Heart left ventricle (tissue), 16 donors: ENCODE measurements at regions of chr21 and their contacts with region 1.

Region 1: GRCh38 chr21:46110499-46111192 is 12.7 kb downstream of the COL6A2 start:
- DNase-seq: peak; percentile 62 to 87 (median 76)
- ATAC-seq: peak; percentile 91 to 96 (median 95)
- H3K4me3 ChIP-seq: peak overlapping the region in 6 of 12 donors; percentile 0 to 19 (median 6)
- H3K27ac ChIP-seq: peak overlapping the region; percentile 29 to 91 (median 80)
- H3K4me1 ChIP-seq: peaks cover 0 to 27% (median 18%) of the 10 kb centered on the region in 12 donors
- H3K27me3 ChIP-seq: no peaks in the 10 kb centered on the region
- CTCF ChIP-seq: peak in 3 of 12 donors; percentile 7 to 36 (median 30)
- POLR2A ChIP-seq: no peak

Region 2: GRCh38 chr21:45655124-45655523 is 455.5 kb before region 1 on chr21:
- intact Hi-C with region 1: no loop called
- DNase-seq: no peak
- ATAC-seq: no peak
- H3K4me3 ChIP-seq: no peak overlapping the region
- H3K27ac ChIP-seq: no peak overlapping the region
- H3K4me1 ChIP-seq: peaks cover 0 to 6% (median 0%) of the 10 kb centered on the region in 12 donors
- H3K27me3 ChIP-seq: peaks cover 0 to 3% (median 0%) of the 10 kb centered on the region in 9 donors
- CTCF ChIP-seq: no peak
- POLR2A ChIP-seq: no peak

Region 3: GRCh38 chr21:45995686-45996179 is 114.9 kb before region 1 on chr21:
- intact Hi-C with region 1: loop called in 1 of 10 experiments (anchors 10 kb)
- DNase-seq: peak in 4 of 5 donors; percentile 16 to 40 (median 27)
- ATAC-seq: no peak
- H3K4me3 ChIP-seq: no peak overlapping the region
- H3K27ac ChIP-seq: peak overlapping the region in 5 of 12 donors; percentile 5 to 80 (median 17)
- H3K4me1 ChIP-seq: peaks cover 0 to 27% (median 0%) of the 10 kb centered on the region in 12 donors
- H3K27me3 ChIP-seq: no peaks in the 10 kb centered on the region
- CTCF ChIP-seq: no peak
- POLR2A ChIP-seq: no peak

Region 4: DNA sequence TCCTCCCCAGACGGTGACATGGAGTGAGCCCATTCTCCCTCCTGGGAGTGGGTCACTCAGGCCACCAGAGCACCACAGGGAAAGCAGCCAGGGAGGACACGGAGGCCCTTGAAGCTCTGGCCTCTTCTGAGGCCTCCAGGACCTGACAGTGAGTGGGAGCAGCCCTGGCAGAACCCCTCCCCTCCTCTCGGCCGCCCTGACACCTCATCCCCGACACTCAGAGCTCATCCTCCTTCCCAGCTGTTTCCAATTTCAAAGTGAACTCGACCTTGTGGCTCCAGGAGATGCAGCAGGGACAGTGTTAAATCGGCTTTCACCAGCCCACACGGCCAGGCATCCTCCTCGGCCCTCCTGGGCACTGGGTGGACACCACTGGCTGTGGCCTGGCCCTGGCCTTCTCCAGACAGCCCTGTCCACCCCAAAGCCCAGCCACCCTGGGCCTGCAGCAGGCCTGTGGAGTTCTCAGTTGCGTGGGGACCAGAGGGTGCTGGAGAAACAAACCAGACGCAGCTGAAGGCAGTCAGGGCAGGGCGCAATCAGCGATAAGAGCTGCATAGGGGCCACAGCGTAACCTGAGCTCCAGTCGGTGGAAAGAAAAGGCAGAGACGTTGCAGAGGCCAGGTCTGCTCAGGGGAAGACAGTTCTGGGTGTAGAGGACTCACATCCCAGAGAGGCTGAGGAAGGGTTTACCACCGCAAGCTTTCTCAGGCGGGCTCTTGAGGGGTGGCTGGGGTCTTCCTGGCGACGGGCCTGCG is 17.6 kb after region 1 on chr21:
- intact Hi-C with region 1: loop called in 1 of 10 experiments (anchors 2 kb)
- DNase-seq: peak; percentile 76 to 86 (median 77)
- ATAC-seq: peak; percentile 72 to 89 (median 83)
- H3K4me3 ChIP-seq: no peak overlapping the region
- H3K27ac ChIP-seq: peak overlapping the region; percentile 20 to 87 (median 75)
- H3K4me1 ChIP-seq: peaks cover 0 to 18% (median 5%) of the 10 kb centered on the region in 12 donors
- H3K27me3 ChIP-seq: no peaks in the 10 kb centered on the region
- CTCF ChIP-seq: no peak
- POLR2A ChIP-seq: no peak

Region 5: DNA sequence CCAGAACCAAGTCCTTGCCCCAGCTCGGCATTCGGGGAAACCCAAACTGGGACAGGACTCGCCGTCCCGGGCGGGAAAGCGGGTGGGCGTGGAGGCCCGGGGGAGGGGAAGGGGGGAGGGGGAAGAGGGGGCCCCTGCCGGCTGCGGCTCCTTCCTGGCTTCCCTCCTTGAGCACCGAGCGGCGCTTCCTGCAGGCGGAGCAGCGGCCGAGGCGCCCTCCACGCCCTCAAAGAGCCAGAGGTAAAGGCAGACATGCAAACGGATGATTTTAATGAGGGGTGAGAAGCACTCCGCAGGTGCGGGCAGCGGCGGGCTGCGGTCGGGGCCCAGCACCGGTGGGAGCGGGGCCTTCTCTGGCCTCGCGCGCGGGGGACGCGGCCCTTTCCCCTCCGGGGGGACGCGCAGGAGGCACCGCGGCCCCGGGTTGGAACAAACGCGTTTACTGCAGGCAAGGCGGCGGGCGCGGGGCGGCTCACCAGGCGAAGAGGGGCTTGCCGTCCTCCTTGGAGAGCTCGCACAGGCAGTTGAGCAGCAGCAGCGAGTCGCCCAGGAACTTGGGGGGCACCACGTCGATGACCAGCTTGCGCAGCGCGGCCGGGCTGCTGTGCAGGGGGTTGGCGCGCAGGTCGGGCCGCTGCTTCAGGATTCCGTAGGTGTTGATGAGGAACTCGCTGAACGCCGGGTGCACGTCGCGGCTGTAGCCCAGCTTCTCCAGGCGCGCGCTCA is 50.4 kb after region 1 on chr21:
- intact Hi-C with region 1: no loop called
- DNase-seq: peak; percentile 5 to 51 (median 17)
- ATAC-seq: no peak
- H3K4me3 ChIP-seq: peak overlapping the region in 3 of 12 donors; percentile 20 to 33 (median 22)
- H3K27ac ChIP-seq: no peak overlapping the region
- H3K4me1 ChIP-seq: no peaks in the 10 kb centered on the region
- H3K27me3 ChIP-seq: peaks cover 0 to 9% (median 0%) of the 10 kb centered on the region in 9 donors
- CTCF ChIP-seq: no peak
- POLR2A ChIP-seq: no peak